Mucosa of descending colon (tissue), 3 donors: ENCODE measurements at regions of chr13 and their contacts with region 1.

Region 1: DNA sequence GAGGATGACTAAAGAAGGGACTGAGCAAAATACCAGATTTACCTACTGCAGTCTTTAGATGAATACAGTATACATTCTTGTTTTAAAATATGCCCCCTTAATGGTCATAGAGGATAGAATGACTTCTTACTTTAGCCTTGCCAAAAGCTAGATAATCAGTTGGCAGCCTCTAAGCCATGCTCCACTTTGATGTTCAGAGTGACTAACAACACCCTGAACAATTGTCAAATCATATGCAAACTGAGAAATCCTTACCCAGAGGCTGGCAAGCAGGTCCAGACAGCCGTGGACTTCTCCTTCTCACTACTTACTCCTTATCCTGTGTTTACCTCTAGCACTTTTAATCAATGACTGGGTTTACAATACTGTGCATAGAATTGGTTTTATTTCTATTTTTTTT is 23.6 kb upstream of the PHF11 start:
- DNase-seq: no peak
- ATAC-seq: no peak
- H3K4me3 ChIP-seq: no peak overlapping the region
- H3K4me1 ChIP-seq: no peaks in the 10 kb centered on the region
- CTCF ChIP-seq: no peak

Region 2: DNA sequence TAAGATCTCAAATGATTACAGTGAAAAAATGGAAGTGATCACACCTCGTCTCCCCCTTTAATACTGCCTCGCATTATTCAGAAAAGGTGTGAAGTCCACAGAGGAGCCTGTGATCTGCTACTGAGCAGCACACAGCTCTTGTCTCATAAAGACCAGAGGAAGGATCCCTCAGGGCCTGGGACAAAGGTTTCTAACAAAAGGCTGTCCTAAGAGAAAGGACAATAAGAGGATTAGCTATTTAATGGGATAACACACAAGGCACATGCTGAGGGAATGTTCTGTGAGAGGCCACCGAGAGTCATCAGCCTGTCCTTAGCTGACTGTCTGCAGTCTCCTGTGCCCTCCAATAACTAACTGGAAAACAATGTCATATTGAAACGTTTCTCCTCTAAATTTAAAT is 192.4 kb after region 1 on chr13:
- intact Hi-C with region 1: loop called in 1 of 2 experiments (anchors 5 kb)
- DNase-seq: no peak
- ATAC-seq: no peak
- H3K4me3 ChIP-seq: no peak overlapping the region
- H3K4me1 ChIP-seq: no peaks in the 10 kb centered on the region
- CTCF ChIP-seq: no peak